K562 (cell line): ENCODE measurements at regions of chr10 and their contacts with region 1.

Region 1: GRCh38 chr10:73785221-73785720 is at the start of gene ZSWIM8:
- DNase-seq: peak; percentile 93 to 96 (median 94)
- ATAC-seq: peak; percentile 87
- H3K4me3 ChIP-seq: peak within 1 kb of the TSS; percentile 89
- H3K27ac ChIP-seq: peak within 1 kb of the TSS; percentile 76
- H3K4me1 ChIP-seq: peaks cover 16 to 32% of the 10 kb centered on the region in 2 experiments
- H3K27me3 ChIP-seq: no peaks in the 10 kb centered on the region
- CTCF ChIP-seq: peak in 1 of 3 experiments; percentile 24; a peak in 1 of 6 replicates
- EP300 ChIP-seq: no peak
- POLR2A ChIP-seq: peak; percentile 85
- RAD21 ChIP-seq: no peak; a peak in 2 of 4 replicates
- polyA plus RNA-seq, gene ZSWIM8: 5.6 to 6.2 TPM

Region 2: GRCh38 chr10:73306171-73306708 is 479.0 kb before region 1 on chr10:
- CTCF ChIA-PET with region 1: no interaction called
- POLR2A ChIA-PET with region 1: no interaction called
- in situ Hi-C with region 1: no loop called
- intact Hi-C with region 1: no loop called
- DNase-seq: no peak
- ATAC-seq: no peak
- H3K4me3 ChIP-seq: no peak overlapping the region
- H3K27ac ChIP-seq: no peak overlapping the region
- H3K4me1 ChIP-seq: no peaks in the 10 kb centered on the region
- H3K27me3 ChIP-seq: no peaks in the 10 kb centered on the region
- CTCF ChIP-seq: no peak
- EP300 ChIP-seq: no peak
- POLR2A ChIP-seq: no peak
- RAD21 ChIP-seq: no peak

Region 3: DNA sequence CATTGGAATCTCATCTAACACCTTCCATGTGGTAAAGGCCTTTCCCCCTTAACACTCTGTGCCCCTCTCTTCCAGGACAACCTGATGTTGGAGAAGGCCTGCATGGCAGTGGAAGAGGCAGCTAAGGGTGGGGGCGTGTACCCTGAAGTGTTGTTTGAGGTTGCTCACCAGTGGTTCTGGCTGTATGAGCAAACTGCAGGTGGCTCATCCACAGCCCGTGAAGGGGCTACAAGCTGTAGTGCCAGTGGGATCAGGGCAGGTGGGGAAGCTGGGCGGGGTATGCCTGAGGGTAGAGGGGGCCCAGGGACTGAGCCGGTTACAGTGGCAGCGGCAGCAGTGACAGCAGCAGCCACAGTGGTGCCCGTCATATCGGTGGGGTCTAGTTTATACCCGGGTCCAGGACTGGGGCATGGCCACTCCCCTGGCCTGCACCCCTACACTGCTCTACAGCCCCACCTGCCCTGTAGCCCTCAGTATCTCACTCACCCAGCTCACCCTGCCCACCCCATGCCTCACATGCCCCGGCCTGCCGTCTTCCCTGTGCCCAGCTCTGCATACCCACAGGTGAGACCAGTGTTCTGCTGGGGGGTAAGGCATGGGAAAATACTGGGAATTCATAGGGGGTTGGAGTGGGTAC is 13.8 kb after region 1 on chr10:
- CTCF ChIA-PET with region 1: no interaction called
- POLR2A ChIA-PET with region 1: interaction called, 61 read pairs
- in situ Hi-C with region 1: no loop called
- intact Hi-C with region 1: no loop called
- DNase-seq: no peak
- ATAC-seq: peak; percentile 19
- H3K4me3 ChIP-seq: no peak overlapping the region
- H3K27ac ChIP-seq: no peak overlapping the region
- H3K4me1 ChIP-seq: peaks cover 0 to 10% of the 10 kb centered on the region in 2 experiments; a peak in 2 of 5 replicates
- H3K27me3 ChIP-seq: no peaks in the 10 kb centered on the region
- CTCF ChIP-seq: no peak
- EP300 ChIP-seq: no peak
- POLR2A ChIP-seq: peak; percentile 22
- RAD21 ChIP-seq: no peak

Region 4: GRCh38 chr10:73810735-73811465 is 25.6 kb after region 1 on chr10:
- CTCF ChIA-PET with region 1: no interaction called
- POLR2A ChIA-PET with region 1: interaction called, 8 read pairs
- in situ Hi-C with region 1: no loop called
- intact Hi-C with region 1: loop called (anchors 2 kb)
- DNase-seq: peak; percentile 65 to 87 (median 70)
- ATAC-seq: peak; percentile 57
- H3K4me3 ChIP-seq: peak overlapping the region; percentile 85
- H3K27ac ChIP-seq: peak overlapping the region; percentile 85
- H3K4me1 ChIP-seq: peaks cover 30 to 48% of the 10 kb centered on the region in 2 experiments
- H3K27me3 ChIP-seq: no peaks in the 10 kb centered on the region
- CTCF ChIP-seq: no peak
- EP300 ChIP-seq: no peak
- POLR2A ChIP-seq: no peak
- RAD21 ChIP-seq: no peak

Region 5: DNA sequence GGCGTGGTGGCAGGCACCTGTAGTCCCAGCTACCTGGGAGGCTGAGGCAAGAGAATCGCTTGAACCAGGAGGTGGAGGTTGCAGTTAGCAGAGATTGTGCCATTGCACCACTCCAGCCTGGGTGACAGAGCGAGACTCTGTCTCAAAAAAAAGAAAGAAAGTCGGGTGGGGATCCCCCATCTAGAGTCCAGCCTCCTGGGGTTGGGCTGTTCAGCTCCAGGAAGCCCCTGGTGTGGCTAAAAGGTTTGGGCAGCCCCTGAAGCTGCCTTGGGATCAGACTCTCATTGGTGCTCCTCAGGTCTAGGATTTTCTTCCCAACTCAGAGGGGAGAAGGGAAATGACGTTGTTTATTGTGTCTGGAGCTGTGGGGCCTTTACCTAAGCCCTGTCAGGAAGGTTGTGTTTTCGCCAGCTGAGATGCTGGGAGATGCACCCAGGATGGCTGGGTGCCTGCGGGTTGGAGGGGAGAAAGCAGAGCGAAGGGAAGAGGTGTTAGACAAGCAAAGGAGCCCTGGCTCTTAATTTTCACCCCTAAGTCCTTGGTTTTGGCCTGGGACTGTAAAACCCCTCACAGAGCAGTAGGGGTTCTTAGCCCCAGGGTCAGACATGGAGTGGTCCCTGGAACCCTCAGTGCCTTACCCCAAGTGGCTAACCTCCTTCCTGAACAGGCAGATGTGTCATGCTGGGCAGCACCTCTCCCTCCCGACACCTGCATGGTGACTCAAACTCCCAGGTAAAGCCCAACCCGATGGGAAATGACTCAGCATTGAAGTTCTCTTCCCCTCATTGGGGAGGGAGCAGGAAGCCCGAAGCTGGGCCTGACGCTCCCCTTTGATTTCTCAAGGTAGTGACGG is 146.7 kb after region 1 on chr10:
- CTCF ChIA-PET with region 1: no interaction called
- POLR2A ChIA-PET with region 1: no interaction called
- in situ Hi-C with region 1: no loop called
- intact Hi-C with region 1: no loop called
- DNase-seq: peak; percentile 77 to 87 (median 84)
- ATAC-seq: peak; percentile 73
- H3K4me3 ChIP-seq: no peak overlapping the region
- H3K27ac ChIP-seq: peak overlapping the region; percentile 68
- H3K4me1 ChIP-seq: peaks cover 20 to 36% of the 10 kb centered on the region in 2 experiments
- H3K27me3 ChIP-seq: no peaks in the 10 kb centered on the region
- CTCF ChIP-seq: no peak
- EP300 ChIP-seq: peak; percentile 27; the same call in 1 of the 2 replicates
- POLR2A ChIP-seq: no peak
- RAD21 ChIP-seq: no peak

Region 6: DNA sequence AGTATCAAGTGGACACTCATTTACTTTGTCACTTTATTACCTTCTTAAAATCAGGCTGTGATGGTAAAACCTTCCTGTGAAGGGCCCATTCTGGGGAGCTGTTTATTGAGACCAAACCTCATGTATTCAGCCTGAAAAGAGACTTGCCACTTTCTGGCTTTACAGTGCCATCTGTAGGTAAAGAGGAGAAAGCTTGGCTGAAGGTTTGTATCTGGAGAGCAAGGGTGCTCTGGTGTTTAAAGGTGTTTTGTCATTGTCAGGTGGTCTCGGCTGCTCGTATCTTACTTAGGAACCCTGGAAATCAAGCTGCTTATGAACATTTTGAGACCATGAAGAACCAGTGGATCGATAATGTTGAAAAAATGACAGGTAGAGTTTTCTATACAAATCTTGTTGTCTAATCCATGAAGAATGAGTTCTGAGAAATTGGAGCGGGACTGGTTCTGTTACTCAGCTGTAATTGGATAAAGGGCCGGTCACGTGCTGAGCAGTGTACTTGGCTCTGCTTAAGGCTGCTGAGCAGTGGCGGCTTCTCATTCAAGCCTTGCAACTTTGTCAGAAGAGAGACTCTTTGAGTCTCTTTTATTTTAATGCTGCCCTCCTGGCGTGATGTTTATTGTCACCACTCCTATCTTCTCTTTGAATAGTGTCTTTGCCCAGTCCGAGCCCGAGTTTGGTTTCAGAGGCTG is 318.4 kb after region 1 on chr10:
- CTCF ChIA-PET with region 1: no interaction called
- POLR2A ChIA-PET with region 1: no interaction called
- in situ Hi-C with region 1: no loop called
- intact Hi-C with region 1: loop called (anchors 10 kb)
- DNase-seq: peak in 2 of 4 experiments; percentile 31 to 45
- ATAC-seq: peak; percentile 76
- H3K4me3 ChIP-seq: no peak overlapping the region
- H3K27ac ChIP-seq: no peak overlapping the region
- H3K4me1 ChIP-seq: no peaks in the 10 kb centered on the region
- H3K27me3 ChIP-seq: no peaks in the 10 kb centered on the region
- CTCF ChIP-seq: peak; percentile 41 to 60 (median 48); a peak in 5 of 6 replicates
- EP300 ChIP-seq: no peak
- POLR2A ChIP-seq: no peak
- RAD21 ChIP-seq: peak; percentile 31 to 68; a peak in 3 of 4 replicates